ENCODE measurements at regions of chr14 and their contacts with region 1.

Region 1: DNA sequence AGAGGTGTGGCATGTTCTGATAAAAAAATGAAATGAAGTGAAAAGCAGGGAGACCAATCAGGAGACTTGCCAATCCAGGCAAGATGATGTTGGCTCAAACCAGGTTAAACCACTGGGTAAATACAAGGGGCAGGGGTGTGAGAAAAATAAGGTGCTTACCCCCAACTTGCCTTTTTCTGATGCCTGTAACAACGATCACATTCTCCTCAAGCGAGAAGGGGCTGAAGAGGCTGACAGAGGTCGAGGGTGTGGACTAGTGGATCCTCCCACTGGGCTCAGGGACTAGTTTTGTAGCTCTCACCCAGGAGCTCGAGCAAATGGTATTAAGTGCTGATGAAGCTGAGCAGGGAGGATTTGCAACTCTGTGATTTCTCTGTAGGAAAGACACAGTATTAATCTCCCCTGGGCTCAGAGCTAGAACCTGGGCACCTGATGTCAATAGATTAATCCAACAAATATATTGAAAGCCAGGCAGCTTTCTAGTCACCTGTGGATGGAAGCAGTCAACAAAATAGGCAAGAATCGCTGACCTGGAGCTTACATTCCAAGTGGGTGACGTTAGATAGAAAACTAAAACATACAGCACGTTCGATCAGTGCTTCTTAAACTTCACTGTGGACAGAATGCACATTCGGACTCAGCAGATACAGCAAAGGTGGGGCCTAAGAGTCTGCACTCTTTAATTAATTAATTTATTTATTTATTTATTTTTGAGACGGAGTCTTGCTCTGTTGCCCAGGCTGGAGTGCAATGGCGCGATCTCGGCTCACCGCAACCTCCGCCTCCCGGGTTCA is 15.2 kb upstream of the EAPP start:
- DNase-seq: peak; percentile 30 to 45
- H3K4me3 ChIP-seq: peak overlapping the region; percentile 6; the same call in 1 of the 2 replicates
- H3K4me1 ChIP-seq: peaks cover 7% of the 10 kb centered on the region
- H3K27me3 ChIP-seq: no peaks in the 10 kb centered on the region

Region 2: GRCh38 chr14:34966413-34966812 is 411.7 kb after region 1 on chr14:
- in situ Hi-C with region 1: no loop called
- DNase-seq: no peak
- H3K4me3 ChIP-seq: no peak overlapping the region
- H3K4me1 ChIP-seq: no peaks in the 10 kb centered on the region
- H3K27me3 ChIP-seq: no peaks in the 10 kb centered on the region

Region 3: DNA sequence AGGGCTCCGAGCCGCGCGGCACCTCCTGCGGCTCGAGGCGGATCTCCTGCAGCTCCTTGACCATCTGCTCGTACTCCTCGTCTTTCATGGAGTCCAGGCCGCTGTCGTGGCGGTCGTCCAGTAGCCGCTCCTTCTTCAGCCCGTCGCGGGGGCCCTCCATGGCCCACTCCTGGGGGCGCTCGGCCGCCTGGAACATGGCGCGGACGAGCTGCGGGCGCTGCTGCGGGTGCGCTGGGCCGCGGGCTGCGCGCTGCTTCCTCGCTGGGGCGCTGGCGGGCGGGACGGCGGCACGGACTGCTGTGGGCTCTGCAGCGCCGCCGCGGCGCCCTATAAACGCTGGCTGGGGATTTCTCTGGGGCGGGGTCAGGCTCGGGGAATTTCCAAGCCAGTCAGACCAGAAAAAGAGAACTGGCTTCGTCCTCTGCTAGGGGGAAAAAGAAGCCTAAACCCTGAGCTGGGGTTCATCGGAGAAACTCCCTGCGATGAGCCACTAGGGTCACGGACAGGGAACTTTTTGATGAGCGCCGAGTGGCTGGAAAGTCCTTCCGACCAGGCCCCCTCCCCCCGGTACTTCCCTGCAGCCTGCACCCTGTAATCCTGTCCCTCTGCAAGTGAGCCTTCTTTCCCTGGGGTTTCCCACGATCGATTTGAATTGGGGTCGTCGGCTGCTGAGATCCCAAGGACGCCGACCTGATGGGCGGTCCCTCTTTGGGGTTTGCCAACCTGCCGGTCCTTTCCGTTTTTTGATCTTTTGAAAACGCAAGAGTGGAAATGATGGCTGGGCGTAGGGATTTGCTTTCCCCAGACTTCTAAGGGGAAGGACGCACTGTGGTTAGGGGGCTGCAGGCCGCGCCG is 849.9 kb after region 1 on chr14 and contains the start of gene NFKBIA:
- in situ Hi-C with region 1: loop called (anchors 25 kb)
- DNase-seq: peak; percentile 73 to 92
- H3K4me3 ChIP-seq: peak within 1 kb of the TSS; percentile 86
- H3K4me1 ChIP-seq: peaks cover 32% of the 10 kb centered on the region
- H3K27me3 ChIP-seq: no peaks in the 10 kb centered on the region

Measured in HAP-1 (cell line).